CD4-positive, alpha-beta memory T cell (primary cell): ENCODE measurements at regions of chr15 and their contacts with region 1.

Region 1: GRCh38 chr15:71945012-71945411 is 134.7 kb downstream of the NR2E3 start:
- DNase-seq: no peak
- H3K4me3 ChIP-seq: no peak overlapping the region
- H3K4me3 Mint-ChIP-seq: no peak overlapping the region
- H3K27ac ChIP-seq: no peak overlapping the region
- H3K27ac Mint-ChIP-seq: no peak overlapping the region
- H3K4me1 ChIP-seq: no peaks in the 10 kb centered on the region
- H3K4me1 Mint-ChIP-seq: no peaks in the 10 kb centered on the region
- H3K27me3 ChIP-seq: no peaks in the 10 kb centered on the region
- H3K27me3 Mint-ChIP-seq: no peaks in the 10 kb centered on the region

Region 2: DNA sequence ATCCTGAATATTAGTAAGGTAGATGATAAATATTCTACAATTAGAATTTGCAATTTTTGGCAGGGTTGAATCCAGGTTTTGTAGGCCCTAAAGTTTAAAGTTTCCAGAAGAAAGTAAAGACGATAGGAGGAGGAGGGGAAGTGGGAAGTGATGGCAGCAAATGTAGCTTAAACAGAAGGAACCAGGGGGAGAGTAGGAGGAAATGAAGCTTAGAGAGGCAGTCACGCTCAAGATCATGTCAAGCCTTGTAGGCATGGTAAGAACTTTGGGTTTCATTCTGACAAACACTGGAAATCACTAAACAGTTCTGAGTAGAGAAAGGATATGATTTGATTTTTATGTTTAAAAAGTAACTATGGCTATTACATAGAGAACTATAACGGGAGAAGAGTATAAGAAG is 70.8 kb before region 1 on chr15:
- CTCF ChIA-PET with region 1: no interaction called
- POLR2A ChIA-PET with region 1: no interaction called
- intact Hi-C with region 1: loop called (anchors 2 kb)
- DNase-seq: no peak
- H3K4me3 ChIP-seq: no peak overlapping the region
- H3K4me3 Mint-ChIP-seq: no peak overlapping the region
- H3K27ac ChIP-seq: no peak overlapping the region
- H3K27ac Mint-ChIP-seq: peak overlapping the region in 2 of 7 donors; percentile 13 to 53
- H3K4me1 ChIP-seq: no peaks in the 10 kb centered on the region
- H3K4me1 Mint-ChIP-seq: no peaks in the 10 kb centered on the region
- H3K27me3 ChIP-seq: no peaks in the 10 kb centered on the region
- H3K27me3 Mint-ChIP-seq: no peaks in the 10 kb centered on the region

Region 3: DNA sequence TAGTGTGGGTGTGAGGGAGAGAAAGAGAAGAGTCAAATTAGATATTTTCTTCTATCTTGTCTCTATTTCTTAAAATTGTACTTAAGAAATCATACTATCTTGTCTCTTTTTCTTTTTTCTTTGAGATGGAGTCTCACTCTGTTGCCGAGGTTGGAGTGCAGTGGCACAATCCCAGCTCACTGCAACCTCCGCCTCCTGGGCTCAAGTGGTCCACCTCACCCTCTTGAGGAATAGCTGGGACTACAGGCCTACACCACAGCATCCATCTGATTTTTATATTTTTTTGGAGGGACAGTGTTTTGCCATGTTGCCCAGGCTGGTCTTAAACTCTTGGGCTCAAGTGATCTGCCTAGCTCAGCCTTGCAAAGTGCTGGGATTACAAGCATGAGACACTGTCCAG is 68.7 kb after region 1 on chr15:
- CTCF ChIA-PET with region 1: no interaction called
- POLR2A ChIA-PET with region 1: no interaction called
- intact Hi-C with region 1: no loop called
- DNase-seq: no peak
- H3K4me3 ChIP-seq: no peak overlapping the region
- H3K4me3 Mint-ChIP-seq: no peak overlapping the region
- H3K27ac ChIP-seq: no peak overlapping the region
- H3K27ac Mint-ChIP-seq: no peak overlapping the region
- H3K4me1 ChIP-seq: no peaks in the 10 kb centered on the region
- H3K4me1 Mint-ChIP-seq: no peaks in the 10 kb centered on the region
- H3K27me3 ChIP-seq: no peaks in the 10 kb centered on the region
- H3K27me3 Mint-ChIP-seq: no peaks in the 10 kb centered on the region